ENCODE measurements at regions of chr12 and their contacts with region 1.

Region 1: GRCh38 chr12:1804545-1805332 is 15.6 kb upstream of the LRTM2 start:
- DNase-seq: peak; percentile 65
- ATAC-seq: peak; percentile 75
- H3K4me3 Mint-ChIP-seq: peak overlapping the region; percentile 30
- H3K27ac Mint-ChIP-seq: peak overlapping the region; percentile 74
- H3K4me1 Mint-ChIP-seq: peaks cover 22% of the 10 kb centered on the region
- H3K27me3 Mint-ChIP-seq: no peaks in the 10 kb centered on the region
- CTCF ChIP-seq: no peak

Region 2: DNA sequence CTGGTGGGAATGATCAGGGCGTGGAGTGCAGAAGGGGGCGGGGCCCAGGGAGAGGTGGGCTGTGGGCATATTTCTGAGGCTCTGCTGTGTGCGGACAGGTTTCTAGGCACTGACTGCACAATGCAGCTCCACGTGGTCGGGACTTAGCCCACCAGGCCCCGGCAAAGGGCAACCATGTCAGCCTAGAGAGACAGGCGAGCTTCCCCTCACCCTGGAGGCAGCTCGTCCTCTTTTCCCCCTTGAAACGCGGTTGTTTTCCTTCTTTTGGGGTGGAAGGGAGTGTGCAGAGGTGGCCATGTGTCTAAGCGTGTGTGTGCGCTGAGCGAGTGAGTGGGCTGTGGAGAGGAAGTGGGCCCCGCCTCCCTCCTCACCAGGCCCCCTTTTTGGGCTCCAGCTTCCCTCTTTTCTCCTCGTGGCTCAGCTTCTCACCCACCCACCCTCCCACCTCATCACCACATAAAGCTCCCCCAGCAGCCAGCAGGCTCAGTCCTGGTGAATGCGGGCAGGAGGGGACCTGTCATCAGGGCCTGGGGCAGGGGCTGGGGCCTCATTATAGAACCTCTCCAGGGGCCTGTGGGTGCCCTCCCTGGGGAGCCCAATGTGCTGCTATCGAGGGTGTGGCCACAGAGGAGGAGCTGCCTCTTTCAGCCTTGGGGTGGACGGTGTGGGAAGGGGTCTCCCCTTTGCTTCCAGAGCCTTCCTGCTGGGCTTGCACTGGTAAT is 37.6 kb after region 1 on chr12:
- CTCF ChIA-PET with region 1: no interaction called
- POLR2A ChIA-PET with region 1: no interaction called
- intact Hi-C with region 1: loop called (anchors 2 kb)
- DNase-seq: no peak
- ATAC-seq: peak; percentile 88
- H3K4me3 Mint-ChIP-seq: peak overlapping the region; percentile 9
- H3K27ac Mint-ChIP-seq: no peak overlapping the region
- H3K4me1 Mint-ChIP-seq: peaks cover 34% of the 10 kb centered on the region
- H3K27me3 Mint-ChIP-seq: peaks cover 9% of the 10 kb centered on the region
- CTCF ChIP-seq: no peak

Region 3: GRCh38 chr12:1924996-1925683 is 120.4 kb after region 1 on chr12:
- CTCF ChIA-PET with region 1: no interaction called
- POLR2A ChIA-PET with region 1: interaction called, 4 read pairs
- intact Hi-C with region 1: loop called (anchors 1 kb)
- DNase-seq: no peak
- ATAC-seq: peak; percentile 41
- H3K4me3 Mint-ChIP-seq: peak overlapping the region; percentile 76
- H3K27ac Mint-ChIP-seq: peak overlapping the region; percentile 91
- H3K4me1 Mint-ChIP-seq: peaks cover 63% of the 10 kb centered on the region
- H3K27me3 Mint-ChIP-seq: no peaks in the 10 kb centered on the region
- CTCF ChIP-seq: no peak

Region 4: DNA sequence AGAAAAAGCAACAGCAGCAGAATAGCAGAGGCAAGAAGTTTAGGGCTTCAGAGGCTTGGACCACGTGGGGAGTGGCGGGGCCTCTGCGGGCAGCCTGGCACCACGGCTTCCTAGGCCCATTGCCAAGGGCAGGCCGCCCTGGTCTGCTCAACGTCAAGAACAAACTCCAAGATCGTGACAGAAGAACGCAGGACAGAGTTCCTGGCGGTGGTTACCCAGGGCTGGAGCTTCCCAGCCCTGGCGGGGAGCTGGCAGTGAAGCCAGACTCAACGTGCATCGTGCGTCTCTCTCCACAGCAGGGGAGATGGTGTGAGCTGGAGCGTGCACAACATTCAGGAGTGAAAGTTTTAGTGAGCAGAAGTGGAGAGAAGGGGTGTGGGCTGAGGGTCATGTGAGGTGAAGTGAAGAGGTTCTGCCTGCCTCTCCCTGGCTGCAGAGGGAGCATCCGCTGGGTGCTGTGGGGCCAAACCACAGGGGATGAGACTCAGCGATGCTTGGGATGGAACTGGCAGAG is 127.6 kb after region 1 on chr12:
- CTCF ChIA-PET with region 1: interaction called, 5 read pairs
- POLR2A ChIA-PET with region 1: no interaction called
- intact Hi-C with region 1: loop called (anchors 1 kb)
- DNase-seq: no peak
- ATAC-seq: peak; percentile 40
- H3K4me3 Mint-ChIP-seq: peak overlapping the region; percentile 60
- H3K27ac Mint-ChIP-seq: no peak overlapping the region
- H3K4me1 Mint-ChIP-seq: peaks cover 54% of the 10 kb centered on the region
- H3K27me3 Mint-ChIP-seq: no peaks in the 10 kb centered on the region
- CTCF ChIP-seq: no peak

Region 5: DNA sequence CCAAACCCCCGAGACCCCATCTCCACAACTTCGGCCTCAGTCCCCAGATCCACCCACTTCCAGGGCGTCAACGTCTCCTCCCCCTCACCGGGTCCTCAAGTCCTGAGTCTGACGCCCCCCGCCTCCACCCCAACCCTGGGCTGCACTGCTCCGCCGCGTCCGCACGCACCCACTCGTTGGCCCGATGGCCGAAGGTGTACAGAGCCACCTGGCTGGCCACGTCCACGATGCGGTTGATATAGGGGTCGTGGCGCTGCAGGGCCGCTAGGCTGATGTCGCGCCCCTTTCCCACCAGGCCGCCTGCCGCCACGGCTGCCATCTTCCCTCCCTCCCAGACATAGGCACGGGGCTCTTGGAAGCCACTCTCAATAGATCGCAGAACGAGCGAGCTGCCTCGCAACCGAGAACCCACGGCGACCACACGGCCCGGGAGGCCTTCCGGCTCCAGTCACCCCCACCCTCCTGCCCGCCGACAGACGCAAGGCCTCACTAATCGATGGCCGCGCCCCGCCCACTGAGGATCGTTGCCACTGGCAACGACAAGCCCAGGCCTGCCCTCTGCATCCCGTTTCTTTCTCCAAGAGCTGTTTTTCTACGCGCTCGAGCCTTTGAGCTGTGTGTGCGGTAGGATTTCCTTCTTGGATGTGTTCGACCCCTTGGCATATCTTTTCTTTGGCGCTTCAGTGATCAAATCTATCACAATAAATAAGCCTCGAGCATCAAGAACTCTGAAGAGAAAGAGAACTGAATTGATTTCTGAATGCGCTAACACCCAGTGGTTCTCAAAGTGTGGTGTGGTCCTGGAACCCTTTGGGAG is 199.6 kb after region 1 on chr12 and contains the start of gene DCP1B:
- CTCF ChIA-PET with region 1: no interaction called
- POLR2A ChIA-PET with region 1: no interaction called
- intact Hi-C with region 1: no loop called
- DNase-seq: peak; percentile 83
- ATAC-seq: peak; percentile 99
- H3K4me3 Mint-ChIP-seq: peak within 1 kb of the TSS; percentile 99
- H3K27ac Mint-ChIP-seq: peak within 1 kb of the TSS; percentile 98
- H3K4me1 Mint-ChIP-seq: peaks cover 26% of the 10 kb centered on the region
- H3K27me3 Mint-ChIP-seq: no peaks in the 10 kb centered on the region
- CTCF ChIP-seq: no peak
- total RNA-seq, gene DCP1B: 12.4 and 14.7 TPM in 2 replicates

Region 6: DNA sequence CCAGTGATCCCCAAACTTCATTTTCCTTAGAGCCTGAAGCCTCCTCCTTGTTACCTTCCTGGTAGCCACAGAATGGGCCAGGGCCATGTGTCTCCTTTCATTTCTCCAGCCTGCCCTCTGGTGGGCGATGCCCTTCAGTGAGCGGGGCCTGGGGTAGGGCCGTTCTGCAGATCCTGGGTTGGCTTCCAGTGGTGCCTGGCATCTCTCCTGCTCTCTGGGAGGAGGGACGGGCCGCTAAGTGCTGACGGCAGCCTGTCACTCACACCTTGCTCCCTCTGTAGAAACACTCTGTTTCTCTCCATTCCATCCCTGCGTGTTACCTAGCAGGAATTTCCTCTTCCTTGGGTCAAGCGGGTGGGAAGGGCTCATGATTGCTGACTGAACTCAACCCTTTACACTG is 480.1 kb after region 1 on chr12:
- CTCF ChIA-PET with region 1: no interaction called
- POLR2A ChIA-PET with region 1: no interaction called
- intact Hi-C with region 1: loop called (anchors 2 kb)
- DNase-seq: no peak
- ATAC-seq: peak; percentile 45
- H3K4me3 Mint-ChIP-seq: no peak overlapping the region
- H3K27ac Mint-ChIP-seq: no peak overlapping the region
- H3K4me1 Mint-ChIP-seq: peaks cover 10% of the 10 kb centered on the region
- H3K27me3 Mint-ChIP-seq: peaks cover 24% of the 10 kb centered on the region
- CTCF ChIP-seq: no peak